ENCODE measurements at regions of chr1 and their contacts with region 1.

Region 1: GRCh38 chr1:25658791-25659431 is 42.3 kb downstream of the MAN1C1 start:
- DNase-seq: peak; percentile 63 to 89
- ATAC-seq: peak; percentile 95 to 99 (median 98)
- H3K4me3 ChIP-seq: no peak overlapping the region
- H3K27ac ChIP-seq: peak overlapping the region; percentile 62
- H3K4me1 ChIP-seq: peaks cover 26% of the 10 kb centered on the region
- H3K27me3 ChIP-seq: no peaks in the 10 kb centered on the region
- CTCF ChIP-seq: no peak

Region 2: DNA sequence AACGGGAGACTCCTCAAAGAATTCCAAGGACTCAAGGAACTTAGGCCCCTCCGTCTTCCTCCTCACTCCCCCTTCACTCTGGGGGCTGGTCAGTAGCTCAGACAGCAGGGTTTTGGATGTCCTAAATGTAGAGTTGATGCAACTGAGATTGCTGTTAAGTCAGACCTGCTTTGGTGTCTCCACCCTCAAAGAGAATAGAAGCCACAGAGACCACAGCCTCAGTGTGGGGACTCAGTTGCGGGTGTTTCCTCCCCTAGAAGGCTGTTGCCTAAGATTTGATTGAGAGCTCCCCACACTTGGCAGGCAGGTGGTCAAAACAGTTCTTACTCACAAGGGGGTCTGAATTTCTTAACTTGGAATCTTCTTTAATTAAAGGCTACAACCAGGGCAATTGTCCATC is 34.8 kb before region 1 on chr1:
- intact Hi-C with region 1: loop called (anchors 5 kb)
- DNase-seq: no peak
- ATAC-seq: no peak
- H3K4me3 ChIP-seq: no peak overlapping the region
- H3K27ac ChIP-seq: no peak overlapping the region
- H3K4me1 ChIP-seq: peaks cover 7% of the 10 kb centered on the region
- H3K27me3 ChIP-seq: no peaks in the 10 kb centered on the region
- CTCF ChIP-seq: no peak

Measured in psoas muscle (tissue), 8 donors.